Activated naive CD4-positive, alpha-beta T cell treated with anti-CD3 and anti-CD28 coated beads for 36 hours (primary cell): ENCODE measurements at regions of chr6 and their contacts with region 1.

Region 1: DNA sequence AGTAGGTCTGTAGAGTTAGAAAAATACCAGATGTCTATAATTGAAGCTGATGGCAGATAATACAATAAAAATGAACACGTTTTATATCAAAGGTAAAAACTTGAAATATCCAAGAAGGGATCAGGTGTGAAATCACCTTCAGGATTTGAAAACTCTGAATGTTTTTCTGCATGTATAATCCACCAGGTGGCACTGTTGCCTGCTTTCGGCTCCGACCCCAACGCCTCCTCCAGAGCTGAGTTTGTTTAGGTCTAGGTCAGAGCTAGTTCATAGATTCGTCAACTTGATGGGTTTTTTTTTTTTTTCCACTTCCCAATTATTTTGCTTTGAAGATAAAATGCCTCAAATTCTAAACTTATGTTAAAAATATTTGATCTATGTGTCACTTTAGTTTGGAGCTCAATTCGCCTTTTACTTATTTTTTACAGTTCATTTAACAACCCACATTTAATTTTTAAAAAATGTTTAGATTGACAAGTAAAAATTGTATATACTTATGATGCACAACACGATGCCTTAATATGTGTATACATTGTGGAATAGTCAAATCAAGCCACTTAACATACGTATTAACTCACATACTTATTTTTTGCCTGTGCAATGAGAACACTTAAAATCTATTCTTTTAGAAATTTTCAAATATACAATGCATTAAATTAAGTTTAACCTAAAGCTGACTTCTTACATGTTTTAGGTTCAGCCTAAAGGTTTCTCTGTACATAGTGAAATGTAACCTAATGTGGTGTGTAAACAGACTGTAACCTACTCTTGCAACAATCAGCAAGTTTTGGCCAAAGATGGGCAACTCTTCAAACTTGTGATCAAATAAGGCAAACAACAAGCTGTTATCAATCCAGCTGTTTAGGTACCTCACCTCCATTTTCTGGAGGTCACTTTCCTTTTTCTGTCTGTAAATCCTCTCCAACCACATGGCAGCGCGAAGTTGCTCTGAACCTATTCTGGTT is 39.4 kb upstream of the ENPP4 start:
- DNase-seq: peak; percentile 72
- H3K4me3 Mint-ChIP-seq: no peak overlapping the region
- H3K27ac Mint-ChIP-seq: no peak overlapping the region
- H3K4me1 Mint-ChIP-seq: no peaks in the 10 kb centered on the region
- H3K27me3 Mint-ChIP-seq: peaks cover 18% of the 10 kb centered on the region

Region 2: GRCh38 chr6:45930420-45931040 is 159.9 kb before region 1 on chr6:
- CTCF ChIA-PET with region 1: interaction called, 18 read pairs
- intact Hi-C with region 1: loop called (anchors 2 kb)
- DNase-seq: peak; percentile 72
- H3K4me3 Mint-ChIP-seq: no peak overlapping the region
- H3K27ac Mint-ChIP-seq: no peak overlapping the region
- H3K4me1 Mint-ChIP-seq: no peaks in the 10 kb centered on the region
- H3K27me3 Mint-ChIP-seq: peaks cover 4% of the 10 kb centered on the region

Region 3: GRCh38 chr6:46080111-46080510 is 10.3 kb before region 1 on chr6:
- CTCF ChIA-PET with region 1: interaction called, 20 read pairs
- intact Hi-C with region 1: no loop called
- DNase-seq: no peak
- H3K4me3 Mint-ChIP-seq: no peak overlapping the region
- H3K27ac Mint-ChIP-seq: no peak overlapping the region
- H3K4me1 Mint-ChIP-seq: peaks cover 10% of the 10 kb centered on the region
- H3K27me3 Mint-ChIP-seq: no peaks in the 10 kb centered on the region

Region 4: DNA sequence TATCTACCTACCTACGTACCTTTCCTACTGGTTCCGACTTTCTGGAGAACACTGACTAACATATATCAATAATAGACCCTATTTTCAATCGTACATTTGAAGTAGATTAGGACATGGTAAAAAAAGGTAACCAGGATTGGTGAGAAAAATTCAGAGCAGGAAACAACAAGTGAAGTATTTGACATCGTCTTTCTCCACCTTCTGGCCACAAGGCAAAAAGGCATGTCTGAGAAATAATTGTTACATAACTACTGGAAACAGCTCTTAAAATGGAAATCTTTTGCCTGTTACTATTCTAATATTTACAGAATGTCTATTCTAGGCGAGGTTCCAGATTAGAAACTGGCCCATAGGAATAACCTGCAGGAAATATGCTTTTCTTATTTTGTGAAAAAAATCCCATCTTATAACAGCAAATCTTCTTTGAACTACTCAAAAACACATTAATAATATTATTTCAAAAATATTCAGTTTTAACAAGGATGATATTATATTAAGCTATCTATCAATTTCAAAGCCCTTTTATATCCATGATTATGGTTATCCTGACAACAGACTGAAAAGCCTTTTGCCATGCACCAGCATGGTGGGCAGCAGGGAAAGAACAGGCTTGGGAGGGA is 320.0 kb after region 1 on chr6:
- CTCF ChIA-PET with region 1: interaction called, 46 read pairs
- intact Hi-C with region 1: loop called (anchors 1 kb)
- DNase-seq: peak; percentile 53
- H3K4me3 Mint-ChIP-seq: no peak overlapping the region
- H3K27ac Mint-ChIP-seq: no peak overlapping the region
- H3K4me1 Mint-ChIP-seq: no peaks in the 10 kb centered on the region
- H3K27me3 Mint-ChIP-seq: no peaks in the 10 kb centered on the region

Region 5: DNA sequence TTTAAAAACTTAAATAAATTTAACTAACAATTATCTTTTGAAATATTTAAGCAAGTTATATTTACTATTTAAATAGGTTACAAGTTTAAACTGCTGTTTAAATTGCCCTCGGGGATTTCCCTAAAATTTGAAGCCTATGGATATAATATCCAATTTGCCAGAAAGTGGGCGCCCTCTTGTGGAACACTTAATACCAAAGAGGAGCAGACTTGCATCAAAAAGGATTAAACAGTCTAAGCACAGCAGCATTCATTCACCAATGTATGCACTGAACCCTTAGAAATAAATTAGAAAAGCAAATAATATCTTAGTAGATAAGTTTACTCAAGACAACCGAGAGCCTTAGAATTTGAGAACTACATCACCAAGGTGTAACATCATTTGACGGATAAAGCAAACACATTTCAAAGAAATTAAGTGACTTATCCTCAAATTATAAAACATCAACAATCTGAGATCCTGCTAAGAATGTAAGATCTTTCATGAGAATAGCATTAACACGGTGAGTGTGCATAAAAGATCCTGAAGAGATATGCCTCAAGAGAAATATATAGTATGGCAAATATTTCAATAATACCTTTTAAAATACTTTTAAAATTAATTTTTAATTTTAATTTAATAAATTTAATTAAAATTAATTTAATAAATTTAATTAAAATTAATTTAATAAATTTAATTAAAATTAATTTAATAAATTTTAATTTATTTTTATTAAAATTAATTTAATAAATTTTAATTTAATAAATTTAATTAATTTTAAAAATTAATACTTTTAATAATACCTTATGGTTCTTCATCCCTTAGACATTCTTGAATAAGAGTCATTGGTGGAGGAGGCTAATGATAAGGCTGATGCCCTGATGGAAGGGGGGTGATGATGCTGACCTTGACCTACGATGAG is 691.3 kb after region 1 on chr6:
- CTCF ChIA-PET with region 1: no interaction called
- intact Hi-C with region 1: loop called (anchors 2 kb)
- DNase-seq: peak; percentile 60
- H3K4me3 Mint-ChIP-seq: no peak overlapping the region
- H3K27ac Mint-ChIP-seq: no peak overlapping the region
- H3K4me1 Mint-ChIP-seq: no peaks in the 10 kb centered on the region
- H3K27me3 Mint-ChIP-seq: peaks cover 10% of the 10 kb centered on the region